IMR-90 (cell line): ENCODE measurements at regions of chr12 and their contacts with region 1.

Region 1: DNA sequence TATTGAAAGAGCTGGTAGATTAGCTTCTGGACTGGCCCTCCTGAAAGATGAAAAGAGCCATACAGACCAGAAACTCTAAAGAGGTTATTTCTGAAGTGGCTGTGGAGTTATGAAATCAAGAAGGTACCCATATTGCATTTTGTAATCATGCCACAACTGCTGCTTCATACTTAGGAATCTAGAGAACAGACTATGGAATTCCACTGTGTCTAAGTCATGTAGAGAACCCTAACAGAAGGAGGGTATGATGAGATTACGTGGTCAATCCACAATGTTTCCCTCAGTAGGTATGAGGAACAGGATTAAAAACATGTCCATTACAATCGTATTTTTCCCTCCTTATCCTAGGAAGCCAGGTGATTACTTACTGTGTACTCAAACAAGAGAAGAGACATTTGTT is 708.8 kb downstream of the RERGL start:
- DNase-seq: no peak
- ATAC-seq: no peak
- H3K4me3 ChIP-seq: no peak overlapping the region
- H3K27ac ChIP-seq: no peak overlapping the region
- H3K4me1 ChIP-seq: no peaks in the 10 kb centered on the region
- H3K27me3 ChIP-seq: no peaks in the 10 kb centered on the region
- CTCF ChIP-seq: no peak
- POLR2A ChIP-seq: no peak
- RAD21 ChIP-seq: no peak

Region 2: DNA sequence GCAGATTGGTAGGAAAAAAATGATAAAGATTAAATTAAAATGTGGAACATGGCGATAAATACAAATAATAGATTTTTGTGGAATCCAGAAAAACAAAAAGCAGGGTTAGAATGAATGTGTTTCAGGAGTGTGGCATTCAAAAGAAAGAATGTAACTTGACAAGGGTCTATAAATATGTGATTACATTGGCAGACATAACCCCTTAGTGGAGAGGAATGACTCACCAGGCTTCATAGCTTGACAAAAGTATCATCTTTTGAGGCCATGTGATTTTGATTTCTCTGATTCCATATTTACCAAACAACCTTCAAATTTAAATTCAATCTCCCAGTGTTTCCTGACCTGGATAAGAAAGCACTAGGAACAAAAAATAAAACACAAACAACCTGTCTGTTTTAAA is 1058.2 kb before region 1 on chr12:
- CTCF ChIA-PET with region 1: no interaction called
- POLR2A ChIA-PET with region 1: no interaction called
- dilution Hi-C with region 1: no loop called
- in situ Hi-C with region 1: no loop called
- intact Hi-C with region 1: loop called (anchors 10 kb)
- DNase-seq: peak; percentile 42
- ATAC-seq: peak; percentile 32; the same call in 1 of the 2 replicates
- H3K4me3 ChIP-seq: no peak overlapping the region
- H3K27ac ChIP-seq: no peak overlapping the region
- H3K4me1 ChIP-seq: no peaks in the 10 kb centered on the region
- H3K27me3 ChIP-seq: no peaks in the 10 kb centered on the region
- CTCF ChIP-seq: no peak
- POLR2A ChIP-seq: no peak
- RAD21 ChIP-seq: no peak

Region 3: DNA sequence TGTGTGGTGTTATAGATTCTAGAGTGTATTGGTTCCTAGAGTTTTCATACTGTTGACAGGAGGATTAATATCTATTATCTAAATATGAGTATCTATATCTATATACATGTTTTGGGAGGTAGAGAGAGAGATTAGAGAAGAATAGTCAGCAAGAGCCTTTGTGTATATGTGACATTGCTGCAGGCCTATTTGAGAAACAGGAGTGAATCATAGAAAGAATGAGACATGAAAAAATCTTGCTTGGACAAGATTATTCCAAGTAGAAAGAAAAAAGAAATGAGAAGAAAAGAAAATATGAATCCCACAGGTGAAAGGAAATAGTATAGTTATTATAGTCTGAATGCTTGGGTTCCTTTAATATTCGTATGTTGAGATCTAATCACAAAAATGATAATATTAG is 11.7 kb before region 1 on chr12:
- CTCF ChIA-PET with region 1: no interaction called
- POLR2A ChIA-PET with region 1: no interaction called
- dilution Hi-C with region 1: no loop called
- in situ Hi-C with region 1: no loop called
- intact Hi-C with region 1: no loop called
- DNase-seq: no peak
- ATAC-seq: no peak
- H3K4me3 ChIP-seq: no peak overlapping the region
- H3K27ac ChIP-seq: no peak overlapping the region
- H3K4me1 ChIP-seq: no peaks in the 10 kb centered on the region
- H3K27me3 ChIP-seq: no peaks in the 10 kb centered on the region
- CTCF ChIP-seq: no peak
- POLR2A ChIP-seq: no peak
- RAD21 ChIP-seq: no peak

Region 4: GRCh38 chr12:17414596-17414995 is 33.4 kb after region 1 on chr12:
- CTCF ChIA-PET with region 1: no interaction called
- POLR2A ChIA-PET with region 1: no interaction called
- dilution Hi-C with region 1: no loop called
- in situ Hi-C with region 1: no loop called
- intact Hi-C with region 1: loop called (anchors 1 kb)
- DNase-seq: no peak
- ATAC-seq: no peak
- H3K4me3 ChIP-seq: no peak overlapping the region
- H3K27ac ChIP-seq: no peak overlapping the region
- H3K4me1 ChIP-seq: no peaks in the 10 kb centered on the region
- H3K27me3 ChIP-seq: no peaks in the 10 kb centered on the region
- CTCF ChIP-seq: no peak
- POLR2A ChIP-seq: no peak
- RAD21 ChIP-seq: no peak